Activated T-helper 2 cell treated with anti-CD3 and anti-CD28 coated beads, Interferon-gamma antibody, Interleukin-2, Interleukin-4, amounts not matched to agents 10 μg/mL and 5 μg/mL and 100 μg/mL, durations not matched to agents 14 hours and 24 hours and 36 hours (primary cell): ENCODE measurements at regions of chr4 and their contacts with region 1.

Region 1: DNA sequence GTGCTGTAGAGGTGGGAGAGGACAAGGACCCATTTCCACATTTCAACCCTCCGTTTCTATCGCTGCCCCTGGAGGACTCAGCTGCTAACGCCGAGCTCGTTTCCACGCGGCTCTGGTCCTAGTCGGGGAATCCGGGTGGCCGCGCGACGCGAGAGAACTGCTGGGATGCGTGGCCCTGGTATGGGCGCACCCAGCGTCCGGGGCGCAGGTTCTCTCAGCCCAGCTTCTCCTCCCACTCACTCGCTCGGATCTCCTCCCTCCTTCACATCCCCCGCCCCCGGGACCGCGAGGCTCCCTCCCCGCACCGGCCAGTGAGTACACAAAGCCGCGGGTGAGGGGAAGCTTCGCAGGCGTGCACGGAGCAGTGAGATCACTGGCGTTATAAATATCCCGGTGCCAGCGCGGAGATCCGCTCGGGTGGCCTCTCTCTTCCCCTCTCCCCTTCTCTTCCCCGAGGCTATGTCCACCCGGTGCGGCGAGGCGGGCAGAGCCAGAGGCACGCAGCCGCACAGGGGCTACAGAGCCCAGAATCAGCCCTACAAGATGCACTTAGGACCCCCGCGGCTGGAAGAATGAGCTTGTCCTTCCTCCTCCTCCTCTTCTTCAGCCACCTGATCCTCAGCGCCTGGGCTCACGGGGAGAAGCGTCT is at the start of gene FGF5:
- DNase-seq: no peak
- H3K4me3 Mint-ChIP-seq: no peak within 1 kb of the TSS
- H3K27ac Mint-ChIP-seq: no peak within 1 kb of the TSS
- H3K4me1 Mint-ChIP-seq: peaks cover 14% of the 10 kb centered on the region
- H3K27me3 Mint-ChIP-seq: peaks cover 82% of the 10 kb centered on the region
- total RNA-seq, gene FGF5: 0.02 TPM in 1 of 2 replicates, not detected in the other

Region 2: DNA sequence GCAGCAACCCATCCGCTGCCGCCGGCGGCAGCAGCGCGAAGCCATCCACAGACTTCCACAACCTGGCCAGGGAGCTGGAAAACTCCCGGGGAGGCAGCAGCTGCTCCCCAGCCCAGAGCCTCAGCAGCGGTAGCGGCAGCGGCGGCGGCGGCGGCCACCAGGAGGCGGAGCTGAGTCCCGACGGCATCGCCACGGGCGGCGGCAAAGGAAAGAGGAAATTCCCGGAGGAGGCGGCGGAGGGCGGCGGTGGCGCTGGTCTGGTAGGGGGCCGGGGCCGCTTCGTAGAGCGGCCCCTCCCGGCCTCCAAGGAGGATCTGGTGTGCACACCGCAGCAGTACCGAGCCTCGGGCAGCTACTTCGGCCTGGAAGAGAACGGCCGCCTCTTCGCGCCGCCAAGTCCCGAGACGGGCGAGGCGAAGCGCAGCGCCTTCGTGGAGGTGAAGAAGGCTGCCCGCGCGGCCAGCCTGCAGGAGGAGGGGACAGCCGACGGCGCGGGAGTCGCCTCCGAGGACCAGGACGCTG is 64.1 kb before region 1 on chr4:
- intact Hi-C with region 1: loop called (anchors 2 kb)
- DNase-seq: peak; percentile 70
- H3K4me3 Mint-ChIP-seq: peak overlapping the region; percentile 72
- H3K27ac Mint-ChIP-seq: peak overlapping the region; percentile 33
- H3K4me1 Mint-ChIP-seq: peaks cover 19% of the 10 kb centered on the region
- H3K27me3 Mint-ChIP-seq: peaks cover 58% of the 10 kb centered on the region

Region 3: DNA sequence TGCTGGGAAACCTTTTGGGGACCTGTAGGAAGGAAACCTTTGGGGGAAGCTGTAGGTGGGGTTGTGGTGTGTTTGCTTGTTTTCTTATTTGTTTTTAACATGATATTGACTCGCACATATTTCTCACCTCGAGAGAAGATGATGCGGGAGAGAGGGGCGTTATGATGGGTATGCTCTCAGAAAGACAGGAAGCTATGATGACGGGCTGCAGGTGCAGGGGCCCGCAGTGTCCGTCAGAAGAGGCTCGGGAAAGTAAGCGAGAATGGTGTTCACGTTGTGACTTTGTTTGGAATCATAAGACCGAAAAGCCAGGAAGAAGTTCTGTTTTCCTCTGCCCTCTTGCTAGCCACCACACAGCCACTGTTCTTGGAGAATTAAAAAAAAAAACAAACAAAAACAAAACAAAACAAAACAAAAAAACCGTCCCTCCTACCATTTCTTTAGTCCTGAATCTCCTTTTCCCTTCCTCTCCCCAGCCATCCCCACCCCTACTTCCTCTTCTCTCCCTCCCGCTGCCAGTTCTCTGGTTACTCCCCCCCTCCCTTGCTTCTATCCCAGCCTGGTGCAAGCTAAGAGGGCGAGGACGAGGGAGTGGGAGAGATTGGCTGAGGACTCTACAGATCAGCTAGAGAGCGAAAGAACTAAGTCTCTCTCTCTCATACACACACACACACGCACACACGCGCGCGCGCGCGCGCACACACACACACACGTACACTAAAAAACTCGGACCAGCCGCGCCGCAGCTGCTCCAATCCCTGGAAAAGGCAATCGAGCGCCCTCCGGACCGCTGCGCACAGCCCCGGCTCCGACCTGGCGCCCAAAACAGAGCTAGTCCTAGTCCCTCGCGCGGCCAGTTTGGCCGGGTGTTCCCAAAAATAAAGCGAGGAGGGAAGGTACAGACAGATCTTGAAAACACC is 763.9 kb after region 1 on chr4 and contains the start of gene BMP3:
- intact Hi-C with region 1: loop called (anchors 10 kb)
- DNase-seq: no peak
- H3K4me3 Mint-ChIP-seq: no peak within 1 kb of the TSS
- H3K27ac Mint-ChIP-seq: no peak within 1 kb of the TSS
- H3K4me1 Mint-ChIP-seq: peaks cover 1% of the 10 kb centered on the region
- H3K27me3 Mint-ChIP-seq: peaks cover 60% of the 10 kb centered on the region
- total RNA-seq, gene BMP3: not detected in 2 replicates